ENCODE measurements at regions of chr4 and their contacts with region 1.

Region 1: DNA sequence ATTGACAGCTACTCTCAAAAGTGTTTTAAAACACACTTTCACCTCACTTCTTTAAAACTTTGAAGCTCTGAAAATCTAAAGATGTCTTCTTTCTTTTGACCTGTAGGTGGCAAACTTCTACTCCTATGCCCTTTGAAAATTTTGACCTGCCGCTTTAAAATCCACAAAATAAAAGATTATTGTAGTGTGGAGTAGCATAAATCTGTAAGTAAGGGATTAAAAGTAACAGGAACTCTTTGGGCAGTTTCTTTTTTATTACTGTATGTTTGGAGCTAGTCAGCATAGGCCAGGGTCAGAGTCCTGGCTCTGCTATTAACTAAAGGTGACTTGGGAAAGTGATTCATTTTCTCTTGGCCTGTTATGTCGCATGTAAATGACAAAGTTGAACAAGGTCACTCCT is 25.5 kb downstream of the BBS12 start:
- DNase-seq: no peak
- H3K4me3 ChIP-seq: no peak overlapping the region
- H3K27ac ChIP-seq: no peak overlapping the region
- H3K27me3 ChIP-seq: no peaks in the 10 kb centered on the region
- CTCF ChIP-seq: peak; percentile 66

Region 2: GRCh38 chr4:122732329-122733026 is 25.6 kb before region 1 on chr4 and contains the start of gene BBS12:
- CTCF ChIA-PET with region 1: interaction called, 10 read pairs
- POLR2A ChIA-PET with region 1: interaction called, 4 read pairs
- DNase-seq: peak; percentile 99
- H3K4me3 ChIP-seq: peak within 1 kb of the TSS; percentile 79
- H3K27ac ChIP-seq: peak within 1 kb of the TSS; percentile 62
- H3K27me3 ChIP-seq: no peaks in the 10 kb centered on the region
- CTCF ChIP-seq: peak; percentile 52
- polyA plus RNA-seq, gene BBS12: 2.2 and 3.2 TPM in 2 replicates

Region 3: DNA sequence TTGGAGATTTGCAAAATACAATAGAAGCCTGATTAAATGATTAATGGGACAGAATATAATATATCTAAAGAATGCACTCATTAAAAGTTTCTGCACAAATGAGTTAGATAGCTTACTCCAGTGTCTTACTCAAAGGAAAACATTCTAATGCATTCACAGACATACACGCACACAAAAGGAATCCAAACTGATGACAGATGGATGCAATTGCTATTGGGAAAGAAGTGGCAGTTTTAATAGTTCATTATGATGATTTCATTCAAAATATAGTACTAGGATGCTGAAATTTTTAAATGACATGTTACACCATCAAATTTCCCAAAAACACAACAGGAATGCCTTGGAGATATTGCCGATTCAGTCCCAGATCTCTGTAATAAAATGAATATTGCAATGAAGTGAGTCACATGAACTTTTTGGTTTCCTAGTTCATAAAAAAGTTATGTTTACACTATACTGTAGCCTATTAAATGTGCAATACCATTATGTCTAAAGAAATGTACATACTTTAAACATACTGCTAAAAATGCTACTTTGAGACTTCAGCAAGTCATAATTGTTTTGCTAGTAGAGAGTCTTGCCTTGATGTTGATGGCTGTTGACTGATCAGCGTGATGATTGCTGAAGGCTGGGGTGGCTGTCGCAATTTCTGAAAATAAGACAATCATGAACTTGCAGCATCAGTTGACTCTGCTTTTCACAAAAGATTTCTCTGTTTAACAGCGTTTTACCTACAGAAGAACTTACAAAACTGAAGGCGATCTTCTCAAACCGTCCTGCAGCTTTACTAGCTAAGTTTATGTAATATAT is 20.0 kb after region 1 on chr4:
- CTCF ChIA-PET with region 1: interaction called, 11 read pairs
- POLR2A ChIA-PET with region 1: no interaction called
- DNase-seq: no peak
- H3K4me3 ChIP-seq: no peak overlapping the region
- H3K27ac ChIP-seq: no peak overlapping the region
- H3K27me3 ChIP-seq: no peaks in the 10 kb centered on the region
- CTCF ChIP-seq: no peak

Region 4: DNA sequence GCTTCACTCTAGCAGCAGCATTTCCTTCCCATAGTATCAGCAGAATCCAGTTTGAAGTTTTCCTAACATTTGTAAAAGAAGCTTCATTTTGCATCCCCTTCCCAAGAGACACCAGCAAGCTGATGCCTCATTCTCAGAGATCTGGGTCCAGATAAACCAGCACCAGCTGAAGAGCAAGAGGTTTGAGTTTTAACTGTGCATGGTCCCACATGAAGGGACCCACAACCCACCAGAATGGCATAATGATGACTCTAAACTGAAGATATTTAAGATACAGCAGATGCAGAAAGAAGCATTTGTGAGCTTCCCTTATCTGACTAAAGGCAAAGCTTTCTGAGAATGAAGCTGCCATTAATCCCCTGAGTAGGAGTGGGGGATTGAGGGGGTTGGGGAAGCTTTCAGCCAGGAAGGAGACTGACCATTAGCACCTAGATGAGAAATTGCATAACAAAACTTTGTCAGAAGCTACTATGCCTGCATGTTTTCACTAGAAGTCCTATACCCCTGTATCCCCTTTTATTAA is 145.8 kb after region 1 on chr4:
- CTCF ChIA-PET with region 1: interaction called, 15 read pairs
- POLR2A ChIA-PET with region 1: no interaction called
- DNase-seq: no peak
- H3K4me3 ChIP-seq: no peak overlapping the region
- H3K27ac ChIP-seq: no peak overlapping the region
- H3K27me3 ChIP-seq: no peaks in the 10 kb centered on the region
- CTCF ChIP-seq: no peak

Region 5: DNA sequence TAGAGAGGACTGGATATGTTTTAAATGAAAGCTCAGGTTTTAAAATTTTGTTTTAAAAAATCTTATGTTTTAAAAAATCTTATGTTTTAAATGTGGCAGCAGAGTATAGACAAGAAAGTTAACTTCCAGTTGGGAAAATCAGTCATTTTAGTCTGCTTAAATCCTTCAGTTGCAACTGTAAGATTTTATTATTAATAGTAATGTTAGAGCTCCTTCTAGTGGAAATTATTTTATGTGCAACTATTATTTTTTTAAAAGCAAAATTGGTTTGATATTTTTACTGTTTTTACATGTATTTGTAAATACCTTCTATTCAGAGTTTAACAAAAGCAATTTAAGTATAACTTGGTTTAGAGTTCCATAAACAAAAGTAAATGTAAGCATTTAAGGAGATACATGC is 172.8 kb after region 1 on chr4:
- CTCF ChIA-PET with region 1: interaction called, 41 read pairs
- POLR2A ChIA-PET with region 1: no interaction called
- DNase-seq: no peak
- H3K4me3 ChIP-seq: no peak overlapping the region
- H3K27ac ChIP-seq: no peak overlapping the region
- H3K27me3 ChIP-seq: no peaks in the 10 kb centered on the region
- CTCF ChIP-seq: peak; percentile 50